ENCODE measurements at regions of chr5 and their contacts with region 1.

Region 1: GRCh38 chr5:59188419-59189225 is 605.7 kb downstream of the RAB3C start:
- DNase-seq: peak; percentile 62 to 90 (median 80)
- ATAC-seq: peak; percentile 96
- H3K4me3 ChIP-seq: peak overlapping the region in 1 of 2 donors; percentile 5
- H3K27ac ChIP-seq: no peak overlapping the region
- H3K4me1 ChIP-seq: peaks cover 0 to 12% of the 10 kb centered on the region in 2 donors
- H3K27me3 ChIP-seq: no peaks in the 10 kb centered on the region
- CTCF ChIP-seq: peak; percentile 74 to 77

Region 2: DNA sequence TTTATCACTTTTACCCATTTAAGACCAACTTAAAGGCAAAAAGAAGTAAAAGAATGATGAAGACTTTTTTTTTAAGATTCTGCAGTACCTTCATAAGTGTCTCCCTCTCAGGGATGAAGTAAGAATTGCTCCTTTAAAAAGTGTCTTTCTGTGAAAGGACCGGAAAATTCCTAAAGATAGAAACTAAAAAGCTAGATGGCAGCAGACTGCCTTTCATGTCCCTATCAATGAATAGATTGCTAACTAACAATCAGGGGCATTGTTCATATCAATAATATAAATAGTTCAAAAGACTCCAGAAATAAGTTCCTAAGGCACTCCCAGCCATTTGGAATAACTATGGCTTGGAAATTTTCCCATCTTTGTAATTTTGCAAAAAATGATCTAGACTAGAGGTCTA is 146.9 kb after region 1 on chr5:
- intact Hi-C with region 1: no loop called
- DNase-seq: no peak
- ATAC-seq: no peak
- H3K4me3 ChIP-seq: no peak overlapping the region
- H3K27ac ChIP-seq: no peak overlapping the region
- H3K4me1 ChIP-seq: peaks cover 0 to 3% of the 10 kb centered on the region in 2 donors
- H3K27me3 ChIP-seq: no peaks in the 10 kb centered on the region
- CTCF ChIP-seq: peak in 1 of 2 donors; percentile 19

Region 3: DNA sequence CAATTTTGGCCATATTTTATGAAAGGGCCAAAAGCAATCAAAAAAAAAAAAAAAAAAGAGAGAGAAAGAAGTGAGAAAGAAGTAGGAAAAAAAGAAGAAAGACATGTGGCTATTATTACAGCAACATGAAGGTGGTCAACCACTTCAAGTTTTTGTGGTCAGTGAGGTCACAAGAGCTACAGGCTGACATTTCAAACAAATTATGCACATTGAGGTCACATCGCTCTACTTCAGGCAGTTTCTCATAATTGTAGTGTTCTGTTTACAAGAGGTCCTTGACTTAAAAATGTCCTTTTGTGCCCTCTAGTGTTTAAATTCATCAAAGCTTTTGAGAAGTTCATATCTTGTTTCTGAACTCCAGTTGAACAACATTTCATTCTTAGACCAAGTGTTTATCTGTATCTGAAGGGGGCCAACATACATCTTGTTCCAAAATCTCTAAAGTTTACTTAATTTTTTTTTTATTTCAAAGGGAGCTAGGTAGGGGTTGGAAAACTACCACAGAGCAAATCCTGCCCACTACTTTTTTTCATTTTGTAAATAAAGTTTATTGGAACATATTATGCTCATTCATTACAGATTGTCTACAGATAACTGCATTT is 191.8 kb after region 1 on chr5:
- intact Hi-C with region 1: loop called in 1 of 2 experiments (anchors 5 kb)
- DNase-seq: peak in 1 of 4 donors; percentile 77
- ATAC-seq: peak; percentile 93
- H3K4me3 ChIP-seq: no peak overlapping the region
- H3K27ac ChIP-seq: no peak overlapping the region
- H3K4me1 ChIP-seq: peaks cover 0 to 4% of the 10 kb centered on the region in 2 donors
- H3K27me3 ChIP-seq: no peaks in the 10 kb centered on the region
- CTCF ChIP-seq: peak; percentile 26 to 35

Measured in left lung (tissue), 14 donors.